ENCODE measurements at regions of chr14 and their contacts with region 1.

Region 1: GRCh38 chr14:50520947-50521815 is 11.2 kb downstream of the MAP4K5 start:
- DNase-seq: peak; percentile 33
- H3K4me3 Mint-ChIP-seq: peak overlapping the region; percentile 61
- H3K27ac Mint-ChIP-seq: peak overlapping the region; percentile 95
- H3K4me1 Mint-ChIP-seq: peaks cover 41% of the 10 kb centered on the region
- H3K27me3 Mint-ChIP-seq: no peaks in the 10 kb centered on the region

Region 2: GRCh38 chr14:49862089-49862673 is 659.0 kb before region 1 on chr14:
- intact Hi-C with region 1: loop called (anchors 1 kb)
- DNase-seq: peak; percentile 81
- H3K4me3 Mint-ChIP-seq: no peak overlapping the region
- H3K27ac Mint-ChIP-seq: no peak overlapping the region
- H3K4me1 Mint-ChIP-seq: peaks cover 10% of the 10 kb centered on the region
- H3K27me3 Mint-ChIP-seq: peaks cover 6% of the 10 kb centered on the region

Region 3: DNA sequence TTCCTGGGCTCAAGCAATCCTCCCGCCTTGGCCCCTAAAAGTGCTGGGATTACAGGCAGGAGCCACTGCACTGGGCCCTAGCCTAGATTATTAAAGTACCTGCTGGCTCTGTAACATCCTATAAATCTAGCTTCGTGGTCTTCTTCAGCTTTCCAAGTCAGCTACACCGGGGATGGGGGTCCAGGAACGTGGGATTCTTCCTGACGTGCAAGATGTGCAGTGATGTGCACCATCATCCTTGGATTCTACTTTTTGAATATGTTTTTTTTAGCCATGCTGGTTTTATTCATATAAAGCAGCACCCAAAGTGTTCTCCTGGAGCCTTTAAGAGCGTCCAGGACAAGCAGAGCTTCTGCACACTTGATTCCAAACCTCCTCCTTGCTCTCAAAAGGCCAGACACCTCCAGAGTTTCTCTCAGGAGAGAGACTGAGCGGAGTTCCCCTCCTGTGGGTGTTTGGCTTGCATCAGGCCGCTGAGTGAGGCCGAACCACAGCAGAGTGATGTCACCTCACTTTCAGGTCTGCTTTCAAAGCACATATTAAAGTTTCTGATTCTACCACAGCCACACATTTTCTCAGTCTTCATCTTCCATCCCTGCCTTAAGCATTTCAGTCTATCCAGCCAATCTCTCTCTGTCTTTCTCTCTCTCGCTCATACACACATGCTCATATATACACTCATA is 438.3 kb before region 1 on chr14:
- intact Hi-C with region 1: loop called (anchors 1 kb)
- DNase-seq: peak; percentile 84
- H3K4me3 Mint-ChIP-seq: peak overlapping the region; percentile 16
- H3K27ac Mint-ChIP-seq: peak overlapping the region; percentile 90
- H3K4me1 Mint-ChIP-seq: peaks cover 70% of the 10 kb centered on the region
- H3K27me3 Mint-ChIP-seq: no peaks in the 10 kb centered on the region

Region 4: GRCh38 chr14:50321009-50321660 is 200.0 kb before region 1 on chr14:
- intact Hi-C with region 1: loop called (anchors 1 kb)
- DNase-seq: peak; percentile 68
- H3K4me3 Mint-ChIP-seq: no peak overlapping the region
- H3K27ac Mint-ChIP-seq: no peak overlapping the region
- H3K4me1 Mint-ChIP-seq: peaks cover 20% of the 10 kb centered on the region
- H3K27me3 Mint-ChIP-seq: no peaks in the 10 kb centered on the region

Region 5: GRCh38 chr14:50396631-50397390 is 124.4 kb before region 1 on chr14 and contains the start of gene CDKL1:
- intact Hi-C with region 1: loop called (anchors 1 kb)
- DNase-seq: peak; percentile 22
- H3K4me3 Mint-ChIP-seq: peak within 1 kb of the TSS; percentile 85
- H3K27ac Mint-ChIP-seq: peak within 1 kb of the TSS; percentile 79
- H3K4me1 Mint-ChIP-seq: peaks cover 14% of the 10 kb centered on the region
- H3K27me3 Mint-ChIP-seq: peaks cover 25% of the 10 kb centered on the region
- total RNA-seq, gene CDKL1: 2.4 and 2.5 TPM in 2 replicates

Region 6: DNA sequence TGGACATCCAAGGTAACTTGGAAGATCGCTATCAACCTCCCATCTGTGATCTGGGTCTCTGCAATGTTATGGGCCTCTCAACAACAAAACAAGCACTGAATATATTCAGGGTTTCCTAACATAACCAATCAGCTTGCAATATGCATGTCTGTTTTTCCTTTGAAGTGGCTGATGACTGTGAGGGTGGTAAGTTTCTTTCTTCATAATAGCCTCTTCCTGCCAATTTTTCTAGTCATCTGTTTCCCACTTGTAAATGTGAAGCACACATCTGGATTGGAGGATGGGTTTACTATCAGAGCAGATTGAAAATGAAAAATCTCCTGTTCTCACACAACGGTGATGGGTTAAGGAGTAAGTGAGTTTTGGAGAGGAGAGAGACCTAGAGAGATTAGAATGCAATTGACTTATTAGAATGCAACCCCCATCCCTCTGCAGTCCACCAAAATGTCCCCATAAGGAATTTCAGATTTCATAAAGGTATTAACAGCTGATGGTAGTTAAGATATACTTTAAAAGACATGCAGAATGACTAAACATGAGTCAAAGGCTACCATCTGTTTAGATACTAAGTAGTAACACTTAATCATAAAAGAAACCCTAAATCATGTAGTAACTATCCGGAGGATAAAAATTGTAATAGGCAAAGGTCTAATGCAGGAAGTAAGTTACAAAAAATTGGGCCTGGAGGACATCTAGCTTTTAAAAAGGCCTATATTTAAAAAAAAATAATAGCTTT is 205.4 kb after region 1 on chr14:
- intact Hi-C with region 1: loop called (anchors 1 kb)
- DNase-seq: peak; percentile 37
- H3K4me3 Mint-ChIP-seq: peak overlapping the region; percentile 52
- H3K27ac Mint-ChIP-seq: peak overlapping the region; percentile 92
- H3K4me1 Mint-ChIP-seq: peaks cover 23% of the 10 kb centered on the region
- H3K27me3 Mint-ChIP-seq: no peaks in the 10 kb centered on the region

Measured in activated T-helper 1 cell treated with anti-CD3 and anti-CD28 coated beads, Interleukin-12 subunit alpha, Interleukin-12 subunit beta, Interleukin-2, Interleukin-4 antibody, amounts not matched to agents 30 ng/mL and 10 ng/mL and 1 ng/mL, durations not matched to agents 14 hours and 24 hours and 36 hours (primary cell).